Activated CD4-positive, alpha-beta memory T cell treated with anti-CD3 and anti-CD28 coated beads for 36 hours (primary cell): ENCODE measurements at regions of chr17 and their contacts with region 1.

Region 1: DNA sequence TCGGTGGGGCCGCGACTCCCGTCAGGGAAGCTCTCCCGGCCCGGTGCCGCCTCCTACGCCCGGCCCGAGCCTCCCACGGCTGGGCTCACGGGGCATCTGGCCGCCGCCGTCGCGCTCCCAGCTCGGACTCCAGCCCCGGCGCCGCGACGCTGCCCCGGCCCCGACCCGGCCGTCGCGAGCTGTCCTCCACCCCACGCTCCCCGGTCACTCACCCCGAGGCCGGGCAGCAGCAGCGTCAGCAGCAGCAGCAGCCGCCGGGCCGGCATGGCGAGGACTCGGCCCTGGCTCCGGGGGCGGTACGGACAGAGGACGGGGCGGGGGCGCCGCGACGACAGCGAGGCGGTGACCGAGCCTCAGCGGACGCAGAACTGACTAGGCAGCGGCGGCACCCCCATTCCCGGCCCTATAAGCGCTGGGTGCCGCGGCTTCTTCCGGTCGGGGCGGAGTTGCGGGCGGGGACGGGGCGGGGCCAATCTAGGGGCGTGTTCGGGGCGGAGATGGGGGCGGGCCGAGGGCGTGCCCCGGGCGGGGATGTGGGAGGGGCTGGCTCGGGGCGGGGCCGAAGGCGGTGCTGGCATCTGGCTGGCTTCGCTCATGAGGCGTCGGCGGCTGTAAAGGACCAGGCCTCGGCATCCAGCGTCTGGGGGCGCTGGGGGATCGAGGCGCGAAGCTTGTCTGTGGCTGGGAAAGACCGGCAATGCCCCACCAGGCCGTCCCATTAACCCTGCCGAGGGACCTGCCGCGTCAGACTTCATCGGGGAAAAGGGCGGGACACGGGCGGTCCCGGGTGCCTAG is at the start of gene ERN1:
- DNase-seq: peak; percentile 94
- H3K4me3 Mint-ChIP-seq: peak within 1 kb of the TSS; percentile 90
- H3K27ac Mint-ChIP-seq: peak within 1 kb of the TSS; percentile 93
- H3K4me1 Mint-ChIP-seq: peaks cover 56% of the 10 kb centered on the region
- H3K27me3 Mint-ChIP-seq: no peaks in the 10 kb centered on the region
- total RNA-seq, gene ERN1: 45.3 to 47.7 TPM

Region 2: DNA sequence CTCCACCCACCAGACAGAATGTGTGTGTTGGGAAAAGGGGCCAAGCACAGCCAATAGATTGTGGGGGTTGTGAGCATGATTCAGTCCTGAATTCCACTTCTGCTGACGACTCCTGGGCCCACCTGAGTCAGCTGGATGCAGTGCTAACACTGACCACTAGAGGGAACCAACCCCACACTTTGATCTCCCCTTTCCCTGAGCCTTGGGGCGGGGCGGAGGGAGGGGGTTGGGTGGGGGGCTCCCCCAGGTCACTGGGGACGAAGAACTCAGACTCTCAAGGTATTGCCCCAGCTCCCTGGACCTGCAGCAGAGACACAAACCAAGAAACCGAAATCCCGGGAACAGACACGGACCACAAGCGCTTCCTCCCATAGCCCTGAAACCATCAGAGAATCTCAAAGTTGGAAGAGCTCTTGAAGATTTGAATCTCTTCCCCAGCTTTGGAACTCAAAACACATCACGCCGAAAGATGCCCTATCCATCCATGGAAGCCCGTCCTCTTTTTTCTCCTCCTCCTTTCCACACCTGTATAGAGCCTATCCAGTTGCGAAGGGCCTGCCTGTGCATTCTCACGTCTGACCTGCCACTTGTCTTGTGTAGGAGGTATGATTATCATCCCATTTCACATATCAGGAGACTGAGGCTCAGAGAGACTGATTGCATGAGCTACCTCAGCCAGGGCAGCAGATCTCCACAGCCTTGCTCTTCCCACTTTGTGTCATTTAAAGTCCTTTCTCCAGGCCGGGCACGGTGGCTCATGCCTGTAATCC is 218.1 kb before region 1 on chr17:
- CTCF ChIA-PET with region 1: interaction called, 29 read pairs
- POLR2A ChIA-PET with region 1: no interaction called
- intact Hi-C with region 1: no loop called
- DNase-seq: peak; percentile 77
- H3K4me3 Mint-ChIP-seq: no peak overlapping the region
- H3K27ac Mint-ChIP-seq: no peak overlapping the region
- H3K4me1 Mint-ChIP-seq: no peaks in the 10 kb centered on the region
- H3K27me3 Mint-ChIP-seq: no peaks in the 10 kb centered on the region

Region 3: DNA sequence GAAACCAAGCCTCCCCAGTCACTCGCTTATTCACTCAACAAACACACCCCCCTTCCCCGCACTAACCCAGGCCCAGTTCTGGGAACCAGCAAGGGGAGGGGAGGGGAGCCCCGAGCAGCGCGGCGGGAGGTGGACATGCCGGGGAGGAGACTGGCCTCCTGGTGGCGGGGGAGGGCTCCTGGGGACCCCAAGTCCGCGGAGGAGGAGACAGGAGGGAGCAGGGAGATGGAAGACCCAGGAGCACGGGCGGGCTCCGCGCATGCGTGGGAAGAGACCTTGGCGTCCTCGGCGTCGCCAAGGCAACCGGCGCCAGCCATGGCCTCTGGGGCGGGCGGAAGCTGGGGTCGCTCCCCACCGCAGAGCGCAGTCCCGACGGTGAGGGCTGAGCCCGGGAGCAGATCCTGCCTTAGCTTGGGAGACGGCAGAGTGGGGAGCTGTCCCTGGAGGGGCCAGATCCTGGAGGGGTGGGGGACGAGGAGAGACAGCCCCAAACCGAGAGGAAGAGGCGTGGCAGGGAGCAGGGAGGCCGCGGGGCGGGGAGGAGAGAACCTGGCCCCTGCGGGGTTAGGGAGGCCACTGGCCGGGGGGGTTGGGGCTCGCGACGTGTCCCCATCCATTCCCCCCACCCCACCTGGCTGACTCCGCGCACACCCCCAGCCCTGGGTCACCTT is 131.8 kb before region 1 on chr17 and contains the start of gene PRR29:
- CTCF ChIA-PET with region 1: interaction called, 12 read pairs
- POLR2A ChIA-PET with region 1: interaction called, 3 read pairs
- intact Hi-C with region 1: no loop called
- DNase-seq: peak; percentile 81
- H3K4me3 Mint-ChIP-seq: peak within 1 kb of the TSS; percentile 88
- H3K27ac Mint-ChIP-seq: peak within 1 kb of the TSS; percentile 28
- H3K4me1 Mint-ChIP-seq: peaks cover 29% of the 10 kb centered on the region
- H3K27me3 Mint-ChIP-seq: peaks cover 3% of the 10 kb centered on the region
- total RNA-seq, gene PRR29: 2.0 to 3.4 TPM

Region 4: GRCh38 chr17:64051153-64051552 is 78.8 kb before region 1 on chr17:
- CTCF ChIA-PET with region 1: interaction called, 89 read pairs
- POLR2A ChIA-PET with region 1: interaction called, 5 read pairs
- intact Hi-C with region 1: no loop called
- DNase-seq: no peak
- H3K4me3 Mint-ChIP-seq: no peak overlapping the region
- H3K27ac Mint-ChIP-seq: peak overlapping the region; percentile 93
- H3K4me1 Mint-ChIP-seq: peaks cover 29% of the 10 kb centered on the region
- H3K27me3 Mint-ChIP-seq: no peaks in the 10 kb centered on the region

Region 5: GRCh38 chr17:64081802-64082799 is 47.9 kb before region 1 on chr17:
- CTCF ChIA-PET with region 1: interaction called, 11 read pairs
- POLR2A ChIA-PET with region 1: interaction called, 44 read pairs
- intact Hi-C with region 1: loop called (anchors 2 kb)
- DNase-seq: peak; percentile 74
- H3K4me3 Mint-ChIP-seq: peak overlapping the region; percentile 49
- H3K27ac Mint-ChIP-seq: no peak overlapping the region
- H3K4me1 Mint-ChIP-seq: peaks cover 29% of the 10 kb centered on the region
- H3K27me3 Mint-ChIP-seq: no peaks in the 10 kb centered on the region

Region 6: DNA sequence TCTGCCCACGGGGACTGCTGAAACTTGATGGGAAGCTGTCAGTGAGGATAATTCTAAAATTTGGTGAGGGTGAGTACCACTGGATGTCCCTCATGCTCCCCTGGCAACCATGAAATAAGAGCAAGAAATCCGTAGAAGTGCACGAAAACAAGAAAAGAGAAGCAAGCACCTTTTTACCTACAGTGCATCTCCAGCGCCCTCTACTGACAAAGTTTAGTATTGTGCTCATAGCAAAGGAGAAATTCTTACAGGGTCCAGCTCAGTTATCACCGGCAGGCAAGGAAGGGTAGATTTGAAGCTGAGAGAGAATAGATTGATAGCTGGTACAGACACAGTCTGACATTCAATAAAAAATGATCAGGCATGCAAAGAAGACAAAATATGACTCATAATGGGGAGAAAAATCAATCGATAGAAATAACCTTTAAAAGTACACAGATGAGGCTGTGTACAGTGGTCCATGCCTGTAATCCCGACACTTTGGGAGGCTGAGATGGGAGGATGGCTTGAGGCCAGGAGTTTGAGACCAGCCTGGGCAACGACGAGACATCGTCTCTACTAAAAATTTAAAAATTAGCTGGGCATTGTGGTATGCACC is 161.4 kb after region 1 on chr17:
- CTCF ChIA-PET with region 1: interaction called, 13 read pairs
- POLR2A ChIA-PET with region 1: no interaction called
- intact Hi-C with region 1: no loop called
- DNase-seq: peak; percentile 11
- H3K4me3 Mint-ChIP-seq: no peak overlapping the region
- H3K27ac Mint-ChIP-seq: no peak overlapping the region
- H3K4me1 Mint-ChIP-seq: no peaks in the 10 kb centered on the region
- H3K27me3 Mint-ChIP-seq: peaks cover 2% of the 10 kb centered on the region